ENCODE measurements at regions of chr1 and their contacts with region 1.

Region 1: DNA sequence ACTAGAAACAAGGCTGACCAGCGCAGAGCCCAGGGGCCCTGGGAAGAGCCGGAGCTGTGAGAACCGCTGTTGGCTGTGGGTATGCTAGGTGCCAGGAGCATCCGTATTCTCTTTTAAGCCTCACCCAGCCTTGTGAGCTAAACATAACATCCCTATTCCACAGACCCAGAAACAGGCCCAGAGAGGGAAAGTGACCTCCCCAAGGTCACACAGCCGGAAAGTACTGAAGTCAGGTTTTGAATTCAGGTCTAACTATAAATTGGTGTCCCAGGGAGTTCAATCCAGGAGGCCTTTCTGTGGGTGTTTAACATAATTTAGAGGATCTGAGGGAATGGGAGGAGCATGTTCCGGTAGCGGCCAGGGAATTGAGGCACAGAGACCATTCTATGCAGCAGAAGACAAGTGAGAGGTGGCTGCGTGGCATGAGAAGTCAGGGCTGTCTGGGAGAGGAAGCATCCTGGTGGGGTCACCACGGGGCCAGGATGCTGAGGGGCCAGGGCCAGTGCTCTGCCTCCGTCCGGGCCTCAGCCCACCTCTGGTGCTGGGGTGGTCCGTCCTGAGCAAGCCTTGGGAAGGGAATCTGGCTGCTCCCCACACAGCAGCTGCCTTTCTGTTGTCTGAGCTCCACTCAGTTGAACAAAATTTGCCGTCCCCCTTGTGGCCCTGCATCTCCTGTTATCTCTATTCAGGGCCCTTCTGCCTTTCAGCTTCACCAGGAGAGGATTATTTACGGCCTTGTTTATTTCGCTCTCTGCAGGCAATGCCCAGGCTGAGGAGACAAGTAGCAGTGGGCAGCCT is 338.8 kb upstream of the VAMP3 start:
- DNase-seq: peak; percentile 60
- H3K4me3 ChIP-seq: no peak overlapping the region
- H3K27ac ChIP-seq: no peak overlapping the region
- H3K4me1 ChIP-seq: peaks cover 3 to 28% (median 16%) of the 10 kb centered on the region in 6 donors
- H3K27me3 ChIP-seq: no peaks in the 10 kb centered on the region
- CTCF ChIP-seq: no peak
- POLR2A ChIP-seq: no peak

Region 2: GRCh38 chr1:7334475-7335035 is 97.7 kb before region 1 on chr1:
- intact Hi-C with region 1: no loop called
- DNase-seq: no peak
- H3K4me3 ChIP-seq: no peak overlapping the region
- H3K27ac ChIP-seq: no peak overlapping the region
- H3K4me1 ChIP-seq: no peaks in the 10 kb centered on the region
- H3K27me3 ChIP-seq: peaks cover 0 to 7% (median 0%) of the 10 kb centered on the region in 7 donors
- CTCF ChIP-seq: no peak
- POLR2A ChIP-seq: no peak

Region 3: DNA sequence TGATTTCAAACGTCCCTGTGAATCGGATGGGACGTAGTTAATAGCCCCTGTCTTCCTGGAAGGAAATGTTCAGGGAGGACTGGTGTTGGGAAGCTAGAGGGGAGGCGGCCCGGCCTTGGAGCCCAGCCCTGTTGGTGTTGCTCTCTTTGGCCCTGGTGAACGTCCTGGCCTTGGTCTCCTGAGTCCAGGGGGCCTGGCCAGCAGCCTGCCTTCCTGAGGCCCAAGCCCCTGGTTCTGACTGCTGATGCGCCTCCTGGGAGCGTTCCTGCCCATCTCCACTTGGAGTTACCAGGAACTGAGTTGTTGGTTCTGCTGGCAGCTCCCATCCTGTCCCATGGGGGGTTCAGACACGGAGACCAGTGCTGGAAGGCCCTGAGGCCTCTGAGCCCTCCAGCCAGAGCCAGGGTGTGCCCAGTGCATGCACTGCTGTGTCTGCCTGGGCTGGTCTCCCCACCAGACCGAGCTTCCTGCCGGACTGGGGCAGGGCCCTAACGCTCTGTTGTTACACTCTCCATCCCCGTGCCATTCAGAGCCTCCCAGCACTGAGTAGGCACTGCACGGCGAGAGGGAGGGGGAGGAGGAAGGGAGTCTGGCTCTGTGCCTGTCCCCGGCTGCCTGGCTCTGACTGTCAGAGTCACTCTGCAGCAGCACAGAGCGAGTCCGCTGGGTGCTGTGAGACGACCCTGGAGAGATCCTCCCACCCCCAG is 43.7 kb before region 1 on chr1:
- intact Hi-C with region 1: loop called (anchors 5 kb)
- DNase-seq: peak; percentile 87
- H3K4me3 ChIP-seq: no peak overlapping the region
- H3K27ac ChIP-seq: peak overlapping the region; percentile 41 to 83 (median 72)
- H3K4me1 ChIP-seq: peaks cover 8 to 37% (median 25%) of the 10 kb centered on the region in 6 donors
- H3K27me3 ChIP-seq: no peaks in the 10 kb centered on the region
- CTCF ChIP-seq: no peak
- POLR2A ChIP-seq: no peak

Measured in spleen (tissue), 13 donors.